CD8-positive, alpha-beta T cell (primary cell): ENCODE measurements at regions of chr22 and their contacts with region 1.

Region 1: DNA sequence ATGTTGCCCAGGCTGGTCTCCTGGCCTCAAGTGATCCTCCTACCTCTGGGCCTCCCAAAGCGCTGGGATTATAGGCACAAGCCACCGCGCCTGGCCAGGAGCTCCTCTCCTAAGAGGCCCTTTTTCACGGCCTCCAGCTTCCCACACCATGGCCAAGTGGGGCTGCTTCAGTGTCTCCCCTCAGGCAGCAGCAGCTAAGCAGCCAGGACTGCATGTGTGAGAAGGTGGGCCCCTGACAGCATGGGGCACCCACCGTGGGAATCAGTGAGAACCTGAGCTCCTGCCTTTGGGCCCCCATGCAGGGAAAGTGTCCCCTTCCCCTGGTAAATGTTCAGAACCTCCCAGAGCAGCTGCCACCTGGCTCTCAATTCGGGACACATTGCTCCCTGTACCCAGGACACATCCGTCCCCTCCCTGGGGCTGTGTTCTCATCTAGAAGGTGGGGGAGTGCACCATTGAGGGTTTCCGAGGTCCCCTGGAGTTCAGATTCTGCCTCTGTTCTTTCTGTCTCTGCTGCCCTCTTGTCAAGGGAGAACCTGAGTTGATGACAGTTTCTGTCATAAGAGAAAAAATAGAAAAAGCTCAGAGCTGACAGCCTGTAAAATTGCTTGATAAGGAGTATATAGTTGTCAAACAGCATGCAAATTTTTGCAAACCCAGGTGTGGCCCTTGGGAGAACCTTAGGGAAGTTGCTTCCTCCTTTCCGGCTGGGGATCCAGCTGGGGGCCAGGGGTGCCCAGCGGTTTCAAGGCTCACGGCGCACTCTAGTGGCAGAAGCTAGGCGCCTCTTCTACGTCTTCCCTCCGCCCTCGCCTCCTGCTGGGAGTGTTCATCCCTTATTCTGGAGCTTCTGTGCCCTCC is 29.7 kb downstream of the FAM83F start:
- DNase-seq: peak; percentile 20 to 78 (median 64)
- ATAC-seq: peak; percentile 72
- H3K4me3 ChIP-seq: no peak overlapping the region
- H3K4me3 Mint-ChIP-seq: no peak overlapping the region
- H3K27ac ChIP-seq: no peak overlapping the region
- H3K27ac Mint-ChIP-seq: no peak overlapping the region
- H3K4me1 ChIP-seq: peaks cover 6% of the 10 kb centered on the region
- H3K4me1 Mint-ChIP-seq: peaks cover 5% of the 10 kb centered on the region
- H3K27me3 ChIP-seq: no peaks in the 10 kb centered on the region
- H3K27me3 Mint-ChIP-seq: no peaks in the 10 kb centered on the region
- CTCF ChIP-seq: peak; percentile 80

Region 2: GRCh38 chr22:39490135-39490798 is 534.2 kb before region 1 on chr22:
- CTCF ChIA-PET with region 1: interaction called, 10 read pairs
- POLR2A ChIA-PET with region 1: no interaction called
- intact Hi-C with region 1: loop called in 1 of 2 experiments (anchors 5 kb)
- DNase-seq: peak; percentile 58 to 89 (median 76)
- ATAC-seq: peak; percentile 99
- H3K4me3 ChIP-seq: no peak overlapping the region
- H3K4me3 Mint-ChIP-seq: peak overlapping the region; percentile 69
- H3K27ac ChIP-seq: no peak overlapping the region
- H3K27ac Mint-ChIP-seq: peak overlapping the region; percentile 67
- H3K4me1 ChIP-seq: peaks cover 7% of the 10 kb centered on the region
- H3K4me1 Mint-ChIP-seq: peaks cover 12% of the 10 kb centered on the region
- H3K27me3 ChIP-seq: no peaks in the 10 kb centered on the region
- H3K27me3 Mint-ChIP-seq: no peaks in the 10 kb centered on the region
- CTCF ChIP-seq: no peak

Region 3: GRCh38 chr22:39559454-39560105 is 464.9 kb before region 1 on chr22:
- CTCF ChIA-PET with region 1: interaction called, 17 read pairs
- POLR2A ChIA-PET with region 1: no interaction called
- intact Hi-C with region 1: loop called (anchors 1 to 2 kb)
- DNase-seq: no peak
- ATAC-seq: no peak
- H3K4me3 ChIP-seq: no peak overlapping the region
- H3K4me3 Mint-ChIP-seq: no peak overlapping the region
- H3K27ac ChIP-seq: no peak overlapping the region
- H3K27ac Mint-ChIP-seq: no peak overlapping the region
- H3K4me1 ChIP-seq: peaks cover 10% of the 10 kb centered on the region
- H3K4me1 Mint-ChIP-seq: peaks cover 6% of the 10 kb centered on the region
- H3K27me3 ChIP-seq: peaks cover 17 to 24% of the 10 kb centered on the region in 2 experiments
- H3K27me3 Mint-ChIP-seq: peaks cover 32% of the 10 kb centered on the region
- CTCF ChIP-seq: no peak

Region 4: DNA sequence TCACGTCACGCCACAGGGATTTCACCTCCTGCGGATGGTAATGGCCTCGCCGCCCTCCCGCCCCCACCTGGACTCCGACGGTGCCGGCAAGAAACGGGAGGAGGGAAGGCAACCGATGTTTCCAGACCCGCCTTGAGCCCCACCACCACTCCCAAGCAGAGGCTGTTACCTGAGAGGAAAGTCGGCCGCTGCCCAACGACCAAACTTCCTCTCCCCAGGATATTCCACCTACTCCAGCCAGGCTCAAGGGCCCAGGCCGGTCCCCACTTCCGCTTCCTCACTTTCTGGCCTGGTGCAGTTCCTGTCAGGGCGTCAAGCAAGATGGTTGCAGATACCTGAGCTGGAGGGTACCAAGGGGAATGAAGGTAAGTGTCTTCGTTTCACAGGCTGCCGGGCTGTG is 130.9 kb before region 1 on chr22 and contains the start of gene ENTHD1:
- CTCF ChIA-PET with region 1: interaction called, 110 read pairs
- POLR2A ChIA-PET with region 1: interaction called, 3 read pairs
- intact Hi-C with region 1: loop called in 1 of 2 experiments (anchors 1 kb)
- DNase-seq: no peak
- ATAC-seq: no peak
- H3K4me3 ChIP-seq: no peak within 1 kb of the TSS
- H3K4me3 Mint-ChIP-seq: no peak within 1 kb of the TSS
- H3K27ac ChIP-seq: no peak within 1 kb of the TSS
- H3K27ac Mint-ChIP-seq: no peak within 1 kb of the TSS
- H3K4me1 ChIP-seq: peaks cover 30% of the 10 kb centered on the region
- H3K4me1 Mint-ChIP-seq: peaks cover 10% of the 10 kb centered on the region
- H3K27me3 ChIP-seq: no peaks in the 10 kb centered on the region
- H3K27me3 Mint-ChIP-seq: no peaks in the 10 kb centered on the region
- CTCF ChIP-seq: no peak
- total RNA-seq, gene ENTHD1: not detected

Region 5: GRCh38 chr22:39932918-39933649 is 91.3 kb before region 1 on chr22:
- CTCF ChIA-PET with region 1: interaction called, 12 read pairs
- POLR2A ChIA-PET with region 1: no interaction called
- intact Hi-C with region 1: no loop called
- DNase-seq: peak in 7 of 9 experiments; percentile 27 to 85 (median 72)
- ATAC-seq: peak; percentile 66
- H3K4me3 ChIP-seq: peak overlapping the region in 1 of 2 experiments; percentile 35
- H3K4me3 Mint-ChIP-seq: peak overlapping the region; percentile 77
- H3K27ac ChIP-seq: peak overlapping the region; percentile 72
- H3K27ac Mint-ChIP-seq: no peak overlapping the region
- H3K4me1 ChIP-seq: peaks cover 98% of the 10 kb centered on the region
- H3K4me1 Mint-ChIP-seq: peaks cover 54% of the 10 kb centered on the region
- H3K27me3 ChIP-seq: no peaks in the 10 kb centered on the region
- H3K27me3 Mint-ChIP-seq: no peaks in the 10 kb centered on the region
- CTCF ChIP-seq: peak; percentile 62

Region 6: DNA sequence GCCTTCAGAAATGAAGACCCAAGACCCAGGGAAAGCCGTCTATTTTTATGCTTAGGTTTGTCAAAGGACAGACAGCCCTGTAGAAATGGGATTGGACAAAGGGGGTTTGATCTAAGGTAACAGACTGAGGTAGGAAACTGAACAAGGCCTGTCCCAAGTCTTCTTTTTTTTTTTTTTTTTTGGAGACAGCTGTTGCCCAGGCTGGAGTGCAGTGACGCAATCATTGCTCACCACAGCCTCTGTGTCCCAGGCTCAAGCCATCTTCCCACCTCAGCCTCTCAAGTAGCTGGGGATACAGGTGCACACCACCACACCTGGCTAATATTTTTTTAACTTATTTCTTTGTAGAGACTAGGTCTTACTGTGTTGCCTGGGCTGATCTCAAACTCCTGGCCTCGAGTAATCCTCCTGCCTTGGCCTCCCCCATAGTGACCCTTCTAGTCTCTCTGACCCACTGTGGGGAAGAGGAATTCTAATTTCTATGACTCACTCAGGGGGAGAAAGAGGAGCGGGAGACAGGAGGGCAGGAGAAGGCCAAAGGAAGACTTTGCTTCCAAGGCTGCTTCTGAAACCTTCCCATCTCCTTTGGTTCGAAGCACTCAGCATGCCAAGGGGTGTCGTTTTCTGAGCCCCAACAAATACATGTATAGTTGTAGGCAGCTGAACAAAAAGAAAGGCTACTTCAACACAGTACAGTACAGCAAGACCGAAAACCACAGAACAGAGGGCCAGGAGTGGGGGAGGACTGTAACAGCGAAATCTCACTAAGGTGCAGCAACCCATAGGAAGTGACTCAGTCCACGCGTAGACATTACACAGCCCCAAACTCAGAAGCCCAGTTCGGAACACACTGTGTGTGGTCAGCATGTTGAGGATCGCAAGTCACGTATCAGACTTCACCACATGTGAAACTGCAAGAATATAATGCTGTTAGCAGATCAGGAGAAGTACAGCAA is 63.4 kb before region 1 on chr22:
- CTCF ChIA-PET with region 1: interaction called, 7 read pairs
- POLR2A ChIA-PET with region 1: no interaction called
- intact Hi-C with region 1: loop called in 1 of 2 experiments (anchors 5 kb)
- DNase-seq: peak; percentile 15 to 90 (median 69)
- ATAC-seq: peak; percentile 82
- H3K4me3 ChIP-seq: no peak overlapping the region
- H3K4me3 Mint-ChIP-seq: peak overlapping the region; percentile 19
- H3K27ac ChIP-seq: peak overlapping the region; percentile 15 to 80
- H3K27ac Mint-ChIP-seq: peak overlapping the region; percentile 92
- H3K4me1 ChIP-seq: peaks cover 60% of the 10 kb centered on the region
- H3K4me1 Mint-ChIP-seq: peaks cover 69% of the 10 kb centered on the region
- H3K27me3 ChIP-seq: no peaks in the 10 kb centered on the region
- H3K27me3 Mint-ChIP-seq: no peaks in the 10 kb centered on the region
- CTCF ChIP-seq: no peak